CD4-positive, alpha-beta T cell (primary cell): ENCODE measurements at regions of chr3 and their contacts with region 1.

Region 1: GRCh38 chr3:113745273-113746068 is 578 bp downstream of the NAA50 start:
- DNase-seq: peak; percentile 61 to 94 (median 70)
- ATAC-seq: peak; percentile 71
- H3K4me3 ChIP-seq: peak overlapping the region; percentile 88
- H3K4me3 Mint-ChIP-seq: peak overlapping the region; percentile 94
- H3K27ac ChIP-seq: peak overlapping the region; percentile 100
- H3K27ac Mint-ChIP-seq: peak overlapping the region; percentile 100
- H3K4me1 ChIP-seq: peaks cover 27% of the 10 kb centered on the region
- H3K4me1 Mint-ChIP-seq: peaks cover 85% of the 10 kb centered on the region
- H3K27me3 ChIP-seq: no peaks in the 10 kb centered on the region
- H3K27me3 Mint-ChIP-seq: no peaks in the 10 kb centered on the region
- CTCF ChIP-seq: peak; percentile 70

Region 2: DNA sequence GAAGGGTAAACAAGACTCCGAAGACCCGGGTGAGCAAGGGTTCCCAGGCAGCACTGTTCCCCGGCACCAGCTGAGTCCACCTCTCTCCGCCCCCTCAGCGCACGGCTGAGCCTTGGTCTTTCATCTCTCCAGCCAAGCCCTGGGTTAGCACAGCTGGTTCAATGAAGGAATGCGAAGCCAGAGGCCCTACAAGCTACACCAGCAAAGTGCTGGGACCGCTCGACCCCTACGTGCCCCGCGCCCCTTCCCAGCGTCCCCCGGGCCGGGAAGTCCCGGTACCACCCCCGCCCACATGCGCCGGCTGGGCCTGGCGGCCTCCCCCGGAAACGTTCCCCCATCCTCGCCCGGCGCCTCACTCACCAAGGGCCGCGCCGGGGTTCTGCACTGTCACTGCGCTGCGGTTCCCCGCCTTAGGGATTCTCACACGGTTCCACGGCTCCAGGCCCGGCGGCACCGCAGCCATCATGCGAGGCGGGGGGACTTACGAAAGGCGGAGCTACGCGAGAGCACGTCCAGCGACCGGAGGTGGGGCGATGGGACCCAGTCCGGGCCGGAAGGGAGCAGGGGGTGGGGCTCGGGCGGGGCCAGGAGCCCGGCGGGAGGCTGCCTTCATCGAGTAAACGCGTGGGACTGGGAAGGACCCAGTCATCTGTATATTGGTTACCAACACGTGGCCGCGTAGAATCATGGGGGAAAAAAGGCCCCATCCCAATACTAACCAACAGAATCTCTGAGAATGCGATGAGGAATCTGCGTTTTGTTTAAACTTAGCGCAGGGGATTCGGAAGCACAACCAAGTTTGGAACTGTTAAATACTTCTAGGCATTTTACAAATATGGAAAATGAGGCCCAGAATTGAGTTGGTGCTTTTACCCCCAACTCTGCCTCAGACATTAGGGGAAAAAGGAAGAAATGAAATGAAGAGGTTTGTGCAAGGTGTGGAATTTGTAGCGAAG is 726.0 kb before region 1 on chr3:
- CTCF ChIA-PET with region 1: no interaction called
- POLR2A ChIA-PET with region 1: no interaction called
- intact Hi-C with region 1: loop called in 1 of 2 experiments (anchors 10 kb)
- DNase-seq: peak; percentile 57 to 94 (median 76)
- ATAC-seq: peak; percentile 82
- H3K4me3 ChIP-seq: peak overlapping the region; percentile 78
- H3K4me3 Mint-ChIP-seq: peak overlapping the region; percentile 93
- H3K27ac ChIP-seq: peak overlapping the region; percentile 91 to 93
- H3K27ac Mint-ChIP-seq: peak overlapping the region; percentile 95
- H3K4me1 ChIP-seq: peaks cover 28% of the 10 kb centered on the region
- H3K4me1 Mint-ChIP-seq: peaks cover 72% of the 10 kb centered on the region
- H3K27me3 ChIP-seq: no peaks in the 10 kb centered on the region
- H3K27me3 Mint-ChIP-seq: no peaks in the 10 kb centered on the region
- CTCF ChIP-seq: no peak

Region 3: DNA sequence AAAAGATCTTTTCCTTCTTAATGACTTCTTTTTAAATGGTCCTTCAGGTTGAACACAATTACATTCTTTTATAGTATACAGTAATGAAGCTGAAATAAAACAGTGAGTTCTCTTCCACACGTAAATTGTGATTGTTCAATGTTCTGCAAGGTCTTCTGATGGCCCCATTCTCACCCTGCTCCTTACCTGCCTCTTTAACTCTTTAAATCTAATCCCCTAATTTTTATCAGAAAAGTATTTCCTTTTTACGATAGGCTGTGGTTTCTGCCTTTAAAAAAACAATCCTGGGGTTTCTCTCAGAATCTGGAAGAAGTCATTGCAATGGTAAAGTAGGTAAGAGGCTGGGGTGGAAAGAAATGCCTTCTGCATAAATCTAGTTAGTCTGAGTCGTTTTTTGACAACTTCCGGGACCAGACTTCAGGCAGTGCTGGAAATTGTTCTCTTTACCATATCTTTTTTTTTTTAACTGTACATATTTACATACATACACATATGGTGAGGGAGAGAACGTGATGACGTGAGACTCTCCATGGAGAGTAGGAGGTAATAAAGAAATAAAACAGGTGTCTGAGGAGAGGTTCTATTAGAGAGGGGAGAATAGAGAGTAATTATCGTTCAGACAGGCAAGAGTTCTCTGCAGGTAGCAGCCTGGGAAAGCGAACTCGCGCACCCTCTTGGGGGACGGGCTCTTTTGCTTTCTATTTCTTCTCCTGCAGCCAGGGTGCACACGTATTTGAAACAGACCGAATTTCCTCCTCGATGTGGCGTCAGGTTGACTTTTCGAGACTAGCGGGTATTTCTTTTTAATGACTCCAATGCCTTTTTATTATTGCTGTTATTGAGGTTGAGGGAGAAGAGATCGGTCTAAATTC is 213.4 kb before region 1 on chr3 and contains the start of gene SIDT1:
- CTCF ChIA-PET with region 1: no interaction called
- POLR2A ChIA-PET with region 1: interaction called, 11 read pairs
- intact Hi-C with region 1: no loop called
- DNase-seq: peak; percentile 56 to 89 (median 68)
- ATAC-seq: peak; percentile 78
- H3K4me3 ChIP-seq: peak within 1 kb of the TSS; percentile 86
- H3K4me3 Mint-ChIP-seq: peak within 1 kb of the TSS; percentile 98
- H3K27ac ChIP-seq: peak within 1 kb of the TSS; percentile 89 to 94
- H3K27ac Mint-ChIP-seq: peak within 1 kb of the TSS; percentile 98
- H3K4me1 ChIP-seq: peaks cover 32% of the 10 kb centered on the region
- H3K4me1 Mint-ChIP-seq: peaks cover 70% of the 10 kb centered on the region
- H3K27me3 ChIP-seq: no peaks in the 10 kb centered on the region
- H3K27me3 Mint-ChIP-seq: no peaks in the 10 kb centered on the region
- CTCF ChIP-seq: peak; percentile 13
- total RNA-seq, gene SIDT1: 28.8 to 37.3 TPM

Region 4: GRCh38 chr3:113728661-113729060 is 16.8 kb before region 1 on chr3:
- CTCF ChIA-PET with region 1: interaction called, 82 read pairs
- POLR2A ChIA-PET with region 1: interaction called, 4 read pairs
- intact Hi-C with region 1: no loop called
- DNase-seq: no peak
- ATAC-seq: no peak
- H3K4me3 ChIP-seq: no peak overlapping the region
- H3K4me3 Mint-ChIP-seq: no peak overlapping the region
- H3K27ac ChIP-seq: no peak overlapping the region
- H3K27ac Mint-ChIP-seq: no peak overlapping the region
- H3K4me1 ChIP-seq: peaks cover 3% of the 10 kb centered on the region
- H3K4me1 Mint-ChIP-seq: peaks cover 51% of the 10 kb centered on the region
- H3K27me3 ChIP-seq: no peaks in the 10 kb centered on the region
- H3K27me3 Mint-ChIP-seq: no peaks in the 10 kb centered on the region
- CTCF ChIP-seq: no peak

Region 5: GRCh38 chr3:113844622-113845222 is 99.3 kb after region 1 on chr3:
- CTCF ChIA-PET with region 1: no interaction called
- POLR2A ChIA-PET with region 1: no interaction called
- intact Hi-C with region 1: no loop called
- DNase-seq: peak in 3 of 14 experiments; percentile 38 to 46 (median 44)
- ATAC-seq: no peak
- H3K4me3 ChIP-seq: no peak overlapping the region
- H3K4me3 Mint-ChIP-seq: no peak overlapping the region
- H3K27ac ChIP-seq: no peak overlapping the region
- H3K27ac Mint-ChIP-seq: no peak overlapping the region
- H3K4me1 ChIP-seq: no peaks in the 10 kb centered on the region
- H3K4me1 Mint-ChIP-seq: no peaks in the 10 kb centered on the region
- H3K27me3 ChIP-seq: no peaks in the 10 kb centered on the region
- H3K27me3 Mint-ChIP-seq: no peaks in the 10 kb centered on the region
- CTCF ChIP-seq: peak; percentile 70

Region 6: DNA sequence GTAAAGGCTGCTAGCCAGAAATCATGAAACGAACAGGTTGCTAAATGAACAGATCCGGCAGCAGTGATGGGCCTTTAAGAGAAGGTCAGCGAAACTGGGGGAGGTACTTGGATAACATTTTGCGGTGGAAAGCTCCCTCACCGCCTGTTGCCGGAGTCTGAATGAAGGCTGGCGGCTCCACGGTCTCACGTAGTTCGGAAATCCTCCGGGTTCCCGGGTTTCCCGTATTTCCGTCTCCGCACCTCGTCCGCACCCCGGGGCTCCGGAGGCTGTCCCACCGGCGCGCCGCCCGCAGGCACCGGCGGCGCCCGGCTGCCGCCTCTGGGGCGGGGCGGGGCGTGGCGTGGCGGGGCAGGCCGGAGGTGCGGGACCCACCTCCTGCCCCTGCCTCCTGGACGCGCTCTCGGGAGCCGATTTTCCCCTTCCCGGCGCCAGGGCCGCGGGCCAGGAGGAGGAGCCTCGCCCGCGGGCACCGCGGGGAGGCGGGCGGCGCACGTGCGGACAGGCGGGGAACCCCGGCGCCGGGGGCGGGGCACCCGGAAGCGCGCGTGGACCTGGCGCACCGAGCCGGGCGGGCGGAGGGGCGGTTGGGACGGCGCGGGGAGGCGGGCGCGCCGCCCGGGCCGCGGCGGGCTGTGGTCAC is 202.0 kb after region 1 on chr3 and contains the start of gene ZDHHC23:
- CTCF ChIA-PET with region 1: interaction called, 3 read pairs
- POLR2A ChIA-PET with region 1: no interaction called
- intact Hi-C with region 1: loop called in 1 of 2 experiments (anchors 5 kb)
- DNase-seq: peak; percentile 25 to 90 (median 54)
- ATAC-seq: peak; percentile 89
- H3K4me3 ChIP-seq: peak within 1 kb of the TSS; percentile 84
- H3K4me3 Mint-ChIP-seq: peak within 1 kb of the TSS; percentile 91
- H3K27ac ChIP-seq: no peak within 1 kb of the TSS
- H3K27ac Mint-ChIP-seq: peak within 1 kb of the TSS; percentile 25
- H3K4me1 ChIP-seq: peaks cover 15% of the 10 kb centered on the region
- H3K4me1 Mint-ChIP-seq: peaks cover 18% of the 10 kb centered on the region
- H3K27me3 ChIP-seq: peaks cover 0 to 3% of the 10 kb centered on the region in 2 experiments
- H3K27me3 Mint-ChIP-seq: peaks cover 13% of the 10 kb centered on the region
- CTCF ChIP-seq: no peak
- total RNA-seq, gene ZDHHC23: 3.2 TPM

Region 7: DNA sequence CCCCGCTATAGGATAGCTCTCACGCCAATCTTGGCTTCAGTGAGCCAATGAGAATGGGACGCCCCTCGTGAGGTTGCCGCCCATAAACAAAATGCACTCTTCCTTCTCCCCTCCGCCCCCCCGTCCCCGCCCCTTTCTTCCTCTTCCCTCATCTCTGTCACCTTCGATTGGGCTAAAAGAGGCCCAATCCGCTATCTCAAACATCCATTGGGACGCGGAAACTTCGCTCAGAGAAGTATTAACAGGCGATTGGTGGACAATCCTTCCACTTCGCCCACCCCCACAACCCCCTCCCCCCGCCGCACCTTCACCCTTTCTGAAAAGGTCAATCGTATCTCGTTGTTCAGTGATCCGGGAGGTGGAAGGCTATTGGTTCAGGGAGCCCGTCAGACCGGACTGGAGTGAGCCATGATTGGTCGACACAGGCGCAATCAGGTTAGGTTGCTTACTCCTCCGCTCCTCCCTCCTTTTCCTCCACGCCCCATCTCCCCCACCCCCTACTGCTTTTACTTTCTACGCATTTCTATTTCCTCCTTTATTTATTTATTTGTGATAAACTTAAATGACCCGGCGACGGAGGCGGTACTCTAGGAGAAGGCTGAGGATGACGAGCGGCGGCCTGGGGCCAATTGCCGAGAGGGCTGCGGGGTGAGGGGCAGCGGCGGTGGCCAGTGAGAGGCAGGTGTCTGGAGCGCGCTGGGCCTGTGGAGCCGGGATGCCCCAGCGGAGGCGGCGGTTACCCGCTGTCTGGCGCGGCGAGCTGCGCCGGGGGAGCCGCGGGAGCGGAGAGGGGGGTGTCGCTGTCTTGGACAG is 1402.1 kb after region 1 on chr3:
- CTCF ChIA-PET with region 1: no interaction called
- POLR2A ChIA-PET with region 1: interaction called, 9 read pairs
- intact Hi-C with region 1: loop called in 1 of 2 experiments (anchors 5 kb)
- DNase-seq: peak; percentile 89 to 99 (median 96)
- ATAC-seq: peak; percentile 72
- H3K4me3 ChIP-seq: peak overlapping the region; percentile 90
- H3K4me3 Mint-ChIP-seq: peak overlapping the region; percentile 94
- H3K27ac ChIP-seq: peak overlapping the region; percentile 91 to 97
- H3K27ac Mint-ChIP-seq: peak overlapping the region; percentile 94
- H3K4me1 ChIP-seq: peaks cover 14% of the 10 kb centered on the region
- H3K4me1 Mint-ChIP-seq: peaks cover 31% of the 10 kb centered on the region
- H3K27me3 ChIP-seq: no peaks in the 10 kb centered on the region
- H3K27me3 Mint-ChIP-seq: no peaks in the 10 kb centered on the region
- CTCF ChIP-seq: no peak